ENCODE measurements at regions of chr1 and their contacts with region 1.

Region 1: DNA sequence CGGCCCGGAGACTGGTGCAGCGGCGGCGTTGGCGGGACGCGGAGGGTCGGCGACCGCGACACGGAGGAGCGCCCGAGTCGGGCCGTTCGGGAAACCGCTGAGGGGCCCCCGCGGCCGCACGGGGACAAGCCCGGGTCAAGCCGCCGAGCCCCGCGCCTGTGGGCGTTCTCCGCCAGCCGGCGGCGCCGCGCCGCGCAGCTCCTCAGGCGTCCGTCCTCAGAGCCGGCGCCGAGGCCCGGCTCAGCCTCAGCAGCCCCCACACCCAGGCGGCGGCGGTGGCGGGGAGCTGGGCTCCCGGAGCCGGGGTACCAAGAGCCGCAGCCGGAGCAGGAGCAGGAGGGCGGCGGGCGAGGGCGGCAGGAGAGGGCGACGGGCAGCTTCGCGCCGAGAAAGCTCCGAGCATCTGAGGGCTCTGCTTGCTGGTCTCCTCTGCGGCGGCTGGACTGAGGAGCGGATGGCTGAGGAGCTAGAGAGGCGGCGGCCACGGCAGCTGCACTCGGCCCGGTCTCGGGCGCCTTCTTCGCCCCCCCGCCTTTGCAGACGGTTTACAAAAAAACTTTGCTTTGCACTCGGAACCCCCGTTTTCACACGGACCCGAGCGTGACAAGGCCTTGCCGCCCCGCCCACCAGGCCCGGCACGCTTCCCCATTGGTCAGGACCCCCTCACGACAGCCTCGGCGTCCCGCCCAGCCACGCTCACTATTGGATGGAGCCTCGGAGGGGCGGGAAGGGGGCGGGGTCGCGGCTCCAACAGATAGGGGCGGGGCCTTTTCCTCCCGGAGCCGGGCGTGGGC is at the start of gene SLC30A1:
- DNase-seq: peak; percentile 99
- H3K4me3 Mint-ChIP-seq: peak within 1 kb of the TSS; percentile 94
- H3K27ac Mint-ChIP-seq: peak within 1 kb of the TSS; percentile 88
- H3K4me1 Mint-ChIP-seq: peaks cover 42% of the 10 kb centered on the region
- H3K27me3 Mint-ChIP-seq: peaks cover under 1% of the 10 kb centered on the region
- total RNA-seq, gene SLC30A1: 10.6 and 12.0 TPM in 2 replicates

Region 2: GRCh38 chr1:211258756-211259637 is 319.8 kb before region 1 on chr1 and contains the start of gene RCOR3:
- intact Hi-C with region 1: loop called (anchors 1 kb)
- DNase-seq: peak; percentile 85
- H3K4me3 Mint-ChIP-seq: peak within 1 kb of the TSS; percentile 90
- H3K27ac Mint-ChIP-seq: peak within 1 kb of the TSS; percentile 90
- H3K4me1 Mint-ChIP-seq: peaks cover 20% of the 10 kb centered on the region
- H3K27me3 Mint-ChIP-seq: peaks cover 4% of the 10 kb centered on the region
- total RNA-seq, gene RCOR3: 40.5 and 41.0 TPM in 2 replicates

Region 3: DNA sequence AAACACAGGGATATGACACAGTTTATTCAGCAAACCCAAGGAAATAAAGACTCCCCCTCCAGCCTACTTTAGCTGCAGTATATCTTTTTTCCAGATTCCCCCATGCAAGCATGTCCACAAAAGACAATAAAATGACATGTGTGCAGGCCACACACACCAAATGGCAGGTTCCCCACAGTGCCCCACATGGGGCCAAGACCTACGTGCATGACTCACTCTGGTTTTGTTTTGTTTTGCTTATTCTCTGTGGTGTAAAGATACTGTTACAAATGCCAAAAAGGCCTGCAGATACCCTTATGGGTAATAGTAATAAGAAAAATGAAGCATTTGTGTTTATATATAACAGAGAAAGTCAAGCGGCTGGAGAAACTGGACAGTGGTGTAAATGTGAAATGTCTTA is 158.4 kb before region 1 on chr1:
- intact Hi-C with region 1: loop called (anchors 5 kb)
- DNase-seq: peak; percentile 5
- H3K4me3 Mint-ChIP-seq: no peak overlapping the region
- H3K27ac Mint-ChIP-seq: peak overlapping the region; percentile 6
- H3K4me1 Mint-ChIP-seq: peaks cover 28% of the 10 kb centered on the region
- H3K27me3 Mint-ChIP-seq: peaks cover under 1% of the 10 kb centered on the region

Region 4: DNA sequence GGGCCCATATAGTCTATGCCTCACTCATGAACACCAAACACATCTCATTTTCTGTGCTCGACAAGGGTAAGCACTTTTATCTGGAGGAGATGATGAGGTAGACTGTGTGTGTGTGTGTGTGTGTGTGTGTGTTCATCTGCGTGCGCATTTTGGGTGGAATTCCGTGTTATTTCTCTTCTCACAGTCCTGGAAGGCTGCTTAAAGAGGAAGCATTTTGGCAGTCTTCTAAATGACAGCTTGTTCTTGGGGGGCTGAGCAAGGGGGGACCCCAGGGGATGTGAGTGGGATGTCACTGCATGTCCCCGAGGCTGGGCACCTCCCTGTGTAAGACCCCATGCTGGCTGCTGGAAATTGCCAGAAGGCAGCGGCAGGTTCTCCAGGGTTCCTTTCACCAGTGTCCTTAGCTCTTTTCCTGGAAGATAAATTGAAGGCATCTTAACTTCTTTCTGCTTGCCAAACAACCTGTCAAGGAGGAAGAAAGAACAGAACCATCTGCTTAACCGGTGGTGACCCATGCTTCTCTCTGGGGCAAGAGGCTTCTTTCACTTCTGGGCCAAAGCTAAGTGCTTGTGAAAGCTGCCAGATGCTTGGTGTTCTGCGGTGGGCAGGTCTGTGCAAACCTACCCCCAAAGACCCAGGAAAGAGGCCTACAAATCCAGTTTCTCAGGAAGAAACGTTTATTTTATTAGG is 77.0 kb before region 1 on chr1:
- intact Hi-C with region 1: no loop called
- DNase-seq: no peak
- H3K4me3 Mint-ChIP-seq: no peak overlapping the region
- H3K27ac Mint-ChIP-seq: no peak overlapping the region
- H3K4me1 Mint-ChIP-seq: no peaks in the 10 kb centered on the region
- H3K27me3 Mint-ChIP-seq: peaks cover 9% of the 10 kb centered on the region

Region 5: GRCh38 chr1:211566431-211567025 is 12.3 kb before region 1 on chr1:
- intact Hi-C with region 1: loop called (anchors 1 kb)
- DNase-seq: no peak
- H3K4me3 Mint-ChIP-seq: no peak overlapping the region
- H3K27ac Mint-ChIP-seq: peak overlapping the region; percentile 10
- H3K4me1 Mint-ChIP-seq: peaks cover 31% of the 10 kb centered on the region
- H3K27me3 Mint-ChIP-seq: peaks cover 23% of the 10 kb centered on the region

Region 6: GRCh38 chr1:211621447-211622198 is 42.8 kb after region 1 on chr1:
- intact Hi-C with region 1: loop called (anchors 2 kb)
- DNase-seq: no peak
- H3K4me3 Mint-ChIP-seq: no peak overlapping the region
- H3K27ac Mint-ChIP-seq: no peak overlapping the region
- H3K4me1 Mint-ChIP-seq: peaks cover 15% of the 10 kb centered on the region
- H3K27me3 Mint-ChIP-seq: peaks cover 2% of the 10 kb centered on the region

Region 7: DNA sequence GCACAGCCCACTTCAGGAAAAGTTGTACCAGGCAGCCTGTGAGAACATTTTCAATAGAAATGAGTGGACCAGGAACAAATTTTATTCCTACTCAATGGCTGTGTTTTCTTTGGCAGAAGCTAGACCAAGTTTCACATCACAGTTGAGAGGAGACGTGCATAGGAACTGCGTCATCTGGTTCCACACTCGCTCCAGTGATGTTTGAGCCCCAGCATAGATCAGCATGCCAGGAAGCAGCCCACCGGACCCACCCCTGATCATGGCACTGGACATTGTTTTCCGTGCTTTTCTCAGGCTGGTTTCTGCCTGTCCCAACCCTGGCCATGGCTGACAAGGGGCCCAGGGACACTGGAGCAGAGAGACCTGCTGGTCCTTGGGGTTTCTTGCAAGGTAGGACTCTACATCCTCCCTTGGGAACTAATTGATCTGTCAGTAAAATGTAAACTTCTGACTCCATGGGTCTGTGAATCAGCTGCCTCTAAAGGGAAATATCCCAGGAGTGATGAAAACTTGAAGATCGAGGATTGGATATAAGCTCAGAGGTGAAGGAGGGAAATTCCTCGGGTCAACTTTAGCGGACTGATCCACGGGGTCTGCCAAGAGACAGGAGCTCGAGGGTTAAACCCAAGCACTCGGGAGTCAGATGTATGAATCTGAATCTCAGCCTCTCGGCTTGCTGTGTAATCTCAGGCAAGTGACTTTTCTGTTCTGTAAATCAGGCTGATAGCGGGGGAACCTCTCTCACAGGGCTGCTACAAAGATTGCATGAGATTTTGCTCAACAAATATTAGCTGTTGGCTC is 60.9 kb after region 1 on chr1:
- intact Hi-C with region 1: no loop called
- DNase-seq: no peak
- H3K4me3 Mint-ChIP-seq: no peak overlapping the region
- H3K27ac Mint-ChIP-seq: no peak overlapping the region
- H3K4me1 Mint-ChIP-seq: no peaks in the 10 kb centered on the region
- H3K27me3 Mint-ChIP-seq: no peaks in the 10 kb centered on the region

Region 8: GRCh38 chr1:211675230-211676105 is 96.6 kb after region 1 on chr1 and contains the start of gene NEK2:
- intact Hi-C with region 1: loop called (anchors 1 kb)
- DNase-seq: peak; percentile 87
- H3K4me3 Mint-ChIP-seq: peak within 1 kb of the TSS; percentile 95
- H3K27ac Mint-ChIP-seq: peak within 1 kb of the TSS; percentile 80
- H3K4me1 Mint-ChIP-seq: peaks cover 42% of the 10 kb centered on the region
- H3K27me3 Mint-ChIP-seq: no peaks in the 10 kb centered on the region
- total RNA-seq, gene NEK2: 13.9 and 18.9 TPM in 2 replicates

Region 9: DNA sequence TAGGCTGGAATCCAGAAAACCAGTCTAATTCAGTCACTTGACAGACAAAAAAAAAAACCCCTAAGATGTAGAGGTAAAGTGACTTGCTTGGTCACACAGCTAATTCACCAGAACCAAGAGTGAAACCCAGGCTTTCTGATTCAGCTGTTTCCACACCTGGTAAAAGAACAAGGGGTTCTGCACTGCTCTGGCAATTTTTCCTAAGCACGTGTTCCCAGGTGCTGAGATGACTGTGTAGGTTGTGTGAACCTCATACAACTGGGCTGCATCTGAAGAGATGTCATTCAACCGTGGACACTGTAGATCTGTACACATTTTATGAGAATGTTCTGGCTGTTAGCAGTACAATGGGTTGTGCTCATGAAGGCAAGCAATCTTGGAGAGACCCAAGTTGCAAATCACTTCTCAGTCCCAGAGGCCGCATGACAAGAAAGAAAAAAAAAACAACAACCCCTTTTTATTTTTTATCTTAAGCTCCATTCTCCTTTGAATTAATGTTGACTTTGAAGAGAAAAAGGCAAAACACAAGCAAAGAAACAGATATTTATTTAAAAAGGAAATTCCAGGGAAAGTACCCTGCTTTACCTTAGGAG is 361.1 kb after region 1 on chr1:
- intact Hi-C with region 1: loop called (anchors 1 kb)
- DNase-seq: peak; percentile 33
- H3K4me3 Mint-ChIP-seq: no peak overlapping the region
- H3K27ac Mint-ChIP-seq: peak overlapping the region; percentile 2
- H3K4me1 Mint-ChIP-seq: peaks cover 47% of the 10 kb centered on the region
- H3K27me3 Mint-ChIP-seq: no peaks in the 10 kb centered on the region